ENCODE measurements at regions of chr2 and their contacts with region 1.

Region 1: GRCh38 chr2:31333527-31334183 is 80.9 kb downstream of the XDH start:
- DNase-seq: peak; percentile 84
- H3K4me3 Mint-ChIP-seq: no peak overlapping the region
- H3K27ac Mint-ChIP-seq: no peak overlapping the region
- H3K4me1 Mint-ChIP-seq: no peaks in the 10 kb centered on the region
- H3K27me3 Mint-ChIP-seq: peaks cover 2% of the 10 kb centered on the region

Region 2: DNA sequence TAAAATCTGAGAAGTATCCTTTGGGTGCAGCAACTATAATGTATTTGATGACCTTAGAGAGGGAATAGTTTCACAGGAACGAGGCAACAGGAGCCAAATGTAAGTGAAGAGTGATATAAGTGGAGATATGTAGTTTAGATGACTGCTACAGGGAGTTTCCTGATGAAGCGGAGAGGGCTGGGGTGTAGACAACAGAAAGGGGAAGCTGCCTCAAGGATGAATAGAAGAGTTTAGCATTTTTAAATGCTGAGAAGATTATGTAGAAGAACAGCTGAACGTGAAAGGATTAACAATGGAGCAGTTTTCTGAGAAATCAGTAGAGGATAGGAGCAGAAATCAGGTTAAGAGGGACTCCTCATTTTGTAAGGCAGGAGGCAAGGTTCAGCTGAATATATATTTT is 753.3 kb before region 1 on chr2:
- CTCF ChIA-PET with region 1: no interaction called
- POLR2A ChIA-PET with region 1: no interaction called
- intact Hi-C with region 1: no loop called
- DNase-seq: no peak
- H3K4me3 Mint-ChIP-seq: no peak overlapping the region
- H3K27ac Mint-ChIP-seq: no peak overlapping the region
- H3K4me1 Mint-ChIP-seq: peaks cover 3% of the 10 kb centered on the region
- H3K27me3 Mint-ChIP-seq: no peaks in the 10 kb centered on the region

Region 3: DNA sequence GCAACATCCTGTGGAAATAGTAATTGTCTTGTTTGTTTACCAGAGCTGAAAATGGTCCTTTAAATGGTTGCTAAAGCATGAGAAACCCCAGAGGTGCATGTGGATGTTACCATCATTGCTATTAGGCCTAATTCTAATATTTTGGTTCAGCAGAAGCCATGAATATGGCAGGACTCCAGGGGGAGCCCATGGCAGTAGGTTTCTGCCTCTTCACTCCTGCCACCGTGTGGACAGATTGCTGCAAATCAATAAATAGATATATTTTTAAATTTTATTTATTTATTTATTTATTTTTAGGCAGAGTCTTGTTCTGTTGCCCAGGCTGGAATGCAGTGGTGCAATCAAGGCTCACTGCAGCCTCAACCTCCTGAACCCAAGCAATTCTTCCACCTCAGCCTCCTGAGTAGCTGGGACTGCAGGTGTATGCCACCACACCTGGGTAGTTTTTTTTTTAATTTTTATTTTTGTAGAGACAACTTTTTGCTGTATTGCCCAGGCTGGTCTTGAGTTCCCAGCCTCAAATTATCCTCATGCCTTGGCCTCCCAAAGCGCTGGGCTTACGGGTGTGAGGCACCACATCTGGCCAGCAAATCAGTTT is 471.5 kb before region 1 on chr2:
- CTCF ChIA-PET with region 1: interaction called, 27 read pairs
- POLR2A ChIA-PET with region 1: no interaction called
- intact Hi-C with region 1: loop called (anchors 2 kb)
- DNase-seq: peak; percentile 45
- H3K4me3 Mint-ChIP-seq: no peak overlapping the region
- H3K27ac Mint-ChIP-seq: no peak overlapping the region
- H3K4me1 Mint-ChIP-seq: peaks cover 8% of the 10 kb centered on the region
- H3K27me3 Mint-ChIP-seq: peaks cover 3% of the 10 kb centered on the region

Region 4: GRCh38 chr2:31138037-31138962 is 195.4 kb before region 1 on chr2 and contains the start of gene GALNT14:
- CTCF ChIA-PET with region 1: interaction called, 13 read pairs
- POLR2A ChIA-PET with region 1: no interaction called
- intact Hi-C with region 1: loop called (anchors 1 kb)
- DNase-seq: peak; percentile 63
- H3K4me3 Mint-ChIP-seq: peak within 1 kb of the TSS; percentile 48
- H3K27ac Mint-ChIP-seq: no peak within 1 kb of the TSS
- H3K4me1 Mint-ChIP-seq: peaks cover 6% of the 10 kb centered on the region
- H3K27me3 Mint-ChIP-seq: peaks cover 39% of the 10 kb centered on the region
- total RNA-seq, gene GALNT14: 0.43 to 0.44 TPM

Region 5: DNA sequence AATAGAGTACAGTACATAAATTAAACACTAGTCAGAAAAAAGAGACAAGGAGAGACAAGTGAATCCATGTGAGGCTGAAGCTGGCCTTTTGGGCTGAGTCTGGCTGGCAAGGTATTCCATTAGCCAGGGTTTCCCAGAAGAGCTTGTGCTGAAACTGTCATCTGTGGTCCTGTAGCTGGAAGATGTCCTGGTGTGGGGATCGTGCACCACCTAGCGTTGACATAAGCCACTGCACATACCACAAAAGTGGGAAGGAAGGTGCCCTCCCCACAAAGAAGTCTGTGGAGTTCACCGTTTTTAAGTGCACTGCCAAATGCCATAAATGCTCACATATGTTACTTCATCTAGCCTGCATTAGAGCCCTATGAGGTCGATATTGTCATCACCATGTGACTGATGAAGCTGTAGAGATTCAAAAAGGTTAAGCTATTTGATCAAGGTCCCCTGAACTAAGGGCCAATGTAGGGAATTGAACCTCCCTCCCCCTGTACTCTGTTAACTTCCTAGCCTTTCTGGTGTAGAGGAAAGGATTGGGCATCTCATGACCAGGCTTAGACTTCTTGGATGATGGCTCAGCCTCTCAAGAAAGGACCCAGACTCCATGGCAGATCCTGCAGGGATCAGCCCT is 163.5 kb before region 1 on chr2:
- CTCF ChIA-PET with region 1: interaction called, 32 read pairs
- POLR2A ChIA-PET with region 1: no interaction called
- intact Hi-C with region 1: loop called (anchors 1 kb)
- DNase-seq: peak; percentile 67
- H3K4me3 Mint-ChIP-seq: no peak overlapping the region
- H3K27ac Mint-ChIP-seq: no peak overlapping the region
- H3K4me1 Mint-ChIP-seq: no peaks in the 10 kb centered on the region
- H3K27me3 Mint-ChIP-seq: no peaks in the 10 kb centered on the region

Region 6: GRCh38 chr2:31233741-31234682 is 99.6 kb before region 1 on chr2 and contains the start of gene EHD3:
- CTCF ChIA-PET with region 1: interaction called, 26 read pairs
- POLR2A ChIA-PET with region 1: no interaction called
- intact Hi-C with region 1: loop called (anchors 1 kb)
- DNase-seq: peak; percentile 90
- H3K4me3 Mint-ChIP-seq: peak within 1 kb of the TSS; percentile 69
- H3K27ac Mint-ChIP-seq: no peak within 1 kb of the TSS
- H3K4me1 Mint-ChIP-seq: peaks cover 16% of the 10 kb centered on the region
- H3K27me3 Mint-ChIP-seq: peaks cover 3% of the 10 kb centered on the region
- total RNA-seq, gene EHD3: 1.4 to 1.5 TPM

Region 7: GRCh38 chr2:31246184-31246852 is 87.3 kb before region 1 on chr2:
- CTCF ChIA-PET with region 1: no interaction called
- POLR2A ChIA-PET with region 1: no interaction called
- intact Hi-C with region 1: no loop called
- DNase-seq: no peak
- H3K4me3 Mint-ChIP-seq: no peak overlapping the region
- H3K27ac Mint-ChIP-seq: no peak overlapping the region
- H3K4me1 Mint-ChIP-seq: no peaks in the 10 kb centered on the region
- H3K27me3 Mint-ChIP-seq: no peaks in the 10 kb centered on the region

Measured in activated CD4-positive, alpha-beta memory T cell treated with anti-CD3 and anti-CD28 coated beads for 36 hours (primary cell).